Panc1 (cell line): ENCODE measurements at regions of chr7 and their contacts with region 1.

Region 1: GRCh38 chr7:98420966-98421612 is 20.2 kb upstream of the BAIAP2L1 start:
- DNase-seq: peak; percentile 58
- ATAC-seq: peak; percentile 74
- H3K4me3 ChIP-seq: no peak overlapping the region
- H3K27ac ChIP-seq: peak overlapping the region; percentile 6; the same call in 1 of the 2 replicates
- H3K4me1 ChIP-seq: peaks cover 32% of the 10 kb centered on the region
- H3K27me3 ChIP-seq: no peaks in the 10 kb centered on the region
- CTCF ChIP-seq: peak; percentile 99

Region 2: GRCh38 chr7:98394377-98394836 is 26.7 kb before region 1 on chr7:
- CTCF ChIA-PET with region 1: no interaction called
- POLR2A ChIA-PET with region 1: interaction called, 10 read pairs
- in situ Hi-C with region 1: no loop called
- intact Hi-C with region 1: no loop called
- DNase-seq: no peak
- ATAC-seq: peak; percentile 80
- H3K4me3 ChIP-seq: no peak overlapping the region
- H3K27ac ChIP-seq: peak overlapping the region; percentile 64
- H3K4me1 ChIP-seq: peaks cover 36% of the 10 kb centered on the region
- H3K27me3 ChIP-seq: no peaks in the 10 kb centered on the region
- CTCF ChIP-seq: no peak

Region 3: DNA sequence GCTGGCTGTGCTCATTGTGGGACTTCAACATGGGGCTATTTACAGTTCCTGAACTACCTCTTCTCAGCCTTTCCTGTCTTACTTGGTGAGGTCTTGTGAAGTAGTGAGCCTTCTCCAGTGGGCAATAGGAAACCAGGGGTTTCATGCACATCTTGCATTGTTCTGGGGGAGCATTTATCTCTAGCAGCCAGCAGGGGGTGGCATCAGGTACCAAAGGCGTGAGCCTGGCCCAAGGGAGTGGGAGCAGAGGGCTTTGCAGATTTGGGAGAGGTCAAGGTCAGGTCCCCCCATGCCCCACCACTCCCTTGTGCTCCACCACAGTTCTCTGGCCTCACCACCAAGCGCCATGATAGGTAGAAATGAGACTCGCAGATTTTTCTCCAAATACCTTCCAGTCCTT is 110.6 kb after region 1 on chr7:
- CTCF ChIA-PET with region 1: no interaction called
- POLR2A ChIA-PET with region 1: no interaction called
- in situ Hi-C with region 1: no loop called
- intact Hi-C with region 1: no loop called
- DNase-seq: no peak
- ATAC-seq: no peak
- H3K4me3 ChIP-seq: no peak overlapping the region
- H3K27ac ChIP-seq: no peak overlapping the region
- H3K4me1 ChIP-seq: no peaks in the 10 kb centered on the region
- H3K27me3 ChIP-seq: 0 out of 2 replicates have a peak, but pooled peaks cover 2% of the 10 kb centered on the region
- CTCF ChIP-seq: no peak; the same call in 1 of the 2 replicates

Region 4: GRCh38 chr7:98826387-98827231 is 405.5 kb after region 1 on chr7:
- CTCF ChIA-PET with region 1: no interaction called
- POLR2A ChIA-PET with region 1: interaction called, 15 read pairs
- in situ Hi-C with region 1: no loop called
- intact Hi-C with region 1: no loop called
- DNase-seq: no peak
- ATAC-seq: peak; percentile 74
- H3K4me3 ChIP-seq: no peak overlapping the region
- H3K27ac ChIP-seq: no peak overlapping the region
- H3K4me1 ChIP-seq: peaks cover 3% of the 10 kb centered on the region; the same call in 1 of the 2 replicates
- H3K27me3 ChIP-seq: no peaks in the 10 kb centered on the region
- CTCF ChIP-seq: no peak

Region 5: GRCh38 chr7:98879979-98880315 is 458.9 kb after region 1 on chr7:
- CTCF ChIA-PET with region 1: interaction called, 11 read pairs
- POLR2A ChIA-PET with region 1: no interaction called
- in situ Hi-C with region 1: no loop called
- intact Hi-C with region 1: no loop called
- DNase-seq: no peak
- ATAC-seq: no peak
- H3K4me3 ChIP-seq: peak overlapping the region; percentile 89 to 99
- H3K27ac ChIP-seq: peak overlapping the region; percentile 84; the same call in 1 of the 2 replicates
- H3K4me1 ChIP-seq: 0 out of 2 replicates have a peak, but pooled peaks cover 4% of the 10 kb centered on the region
- H3K27me3 ChIP-seq: no peaks in the 10 kb centered on the region
- CTCF ChIP-seq: no peak